Mammary epithelial cell (primary cell): ENCODE measurements at regions of chr2 and their contacts with region 1.

Region 1: GRCh38 chr2:56613920-56614319 is 430.1 kb downstream of the CCDC85A start:
- DNase-seq: no peak
- H3K4me3 ChIP-seq: no peak overlapping the region
- H3K27ac ChIP-seq: no peak overlapping the region
- H3K4me1 ChIP-seq: no peaks in the 10 kb centered on the region
- H3K27me3 ChIP-seq: no peaks in the 10 kb centered on the region
- CTCF ChIP-seq: no peak

Region 2: GRCh38 chr2:56055405-56055804 is 558.5 kb before region 1 on chr2:
- CTCF ChIA-PET with region 1: no interaction called
- dilution Hi-C with region 1: no loop called
- in situ Hi-C with region 1: no loop called
- intact Hi-C with region 1: no loop called
- DNase-seq: no peak
- H3K4me3 ChIP-seq: no peak overlapping the region
- H3K27ac ChIP-seq: no peak overlapping the region
- H3K4me1 ChIP-seq: no peaks in the 10 kb centered on the region
- H3K27me3 ChIP-seq: no peaks in the 10 kb centered on the region
- CTCF ChIP-seq: no peak

Region 3: GRCh38 chr2:56239437-56239836 is 374.5 kb before region 1 on chr2:
- CTCF ChIA-PET with region 1: no interaction called
- dilution Hi-C with region 1: no loop called
- in situ Hi-C with region 1: no loop called
- intact Hi-C with region 1: no loop called
- DNase-seq: peak; percentile 53
- H3K4me3 ChIP-seq: no peak overlapping the region
- H3K27ac ChIP-seq: no peak overlapping the region
- H3K4me1 ChIP-seq: no peaks in the 10 kb centered on the region
- H3K27me3 ChIP-seq: no peaks in the 10 kb centered on the region
- CTCF ChIP-seq: no peak

Region 4: DNA sequence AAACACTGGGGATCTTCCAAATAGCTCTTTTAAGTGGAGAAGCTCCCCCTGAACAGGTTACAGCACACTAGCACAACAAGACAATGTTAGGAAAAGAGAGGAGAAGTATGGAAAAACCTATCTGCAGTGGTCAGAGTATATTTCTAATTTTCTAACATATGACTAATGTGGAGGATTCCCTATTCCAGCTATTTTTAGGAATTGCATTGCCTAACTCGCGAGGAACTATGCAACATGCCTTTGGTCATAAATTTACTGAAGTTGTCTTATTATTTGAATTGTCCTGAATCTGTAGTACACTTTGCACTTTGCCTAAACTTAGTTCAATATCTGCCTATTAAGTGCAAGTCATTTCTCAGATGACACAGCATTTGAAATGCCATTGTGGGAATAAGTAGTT is 48.8 kb before region 1 on chr2:
- CTCF ChIA-PET with region 1: no interaction called
- dilution Hi-C with region 1: loop called (anchors 5 kb)
- in situ Hi-C with region 1: no loop called
- intact Hi-C with region 1: no loop called
- DNase-seq: no peak
- H3K4me3 ChIP-seq: no peak overlapping the region
- H3K27ac ChIP-seq: no peak overlapping the region
- H3K4me1 ChIP-seq: no peaks in the 10 kb centered on the region
- H3K27me3 ChIP-seq: no peaks in the 10 kb centered on the region
- CTCF ChIP-seq: no peak

Region 5: DNA sequence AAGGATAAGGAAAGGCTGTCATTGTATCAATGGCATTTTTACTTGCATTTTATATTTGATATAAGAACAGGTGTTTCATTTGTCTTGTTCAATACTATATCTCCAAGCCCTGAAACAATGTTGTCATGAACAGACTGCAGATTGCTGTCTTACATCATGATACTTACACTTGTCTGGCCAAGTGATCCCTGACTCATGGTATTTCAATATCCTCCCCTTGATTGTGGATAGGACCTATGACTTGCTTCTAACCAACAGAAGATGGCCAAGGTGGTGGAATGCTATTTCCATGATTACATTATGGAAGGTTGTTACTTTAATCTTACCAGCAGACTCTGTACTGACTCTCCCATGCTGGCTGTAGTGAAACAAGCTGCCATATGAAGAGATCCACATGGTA is 41.0 kb after region 1 on chr2:
- CTCF ChIA-PET with region 1: no interaction called
- dilution Hi-C with region 1: no loop called
- in situ Hi-C with region 1: no loop called
- intact Hi-C with region 1: no loop called
- DNase-seq: peak; percentile 21
- H3K4me3 ChIP-seq: no peak overlapping the region
- H3K27ac ChIP-seq: no peak overlapping the region
- H3K4me1 ChIP-seq: no peaks in the 10 kb centered on the region
- H3K27me3 ChIP-seq: no peaks in the 10 kb centered on the region
- CTCF ChIP-seq: no peak

Region 6: GRCh38 chr2:56666777-56667176 is 52.9 kb after region 1 on chr2:
- CTCF ChIA-PET with region 1: no interaction called
- dilution Hi-C with region 1: loop called (anchors 5 kb)
- in situ Hi-C with region 1: no loop called
- intact Hi-C with region 1: no loop called
- DNase-seq: no peak
- H3K4me3 ChIP-seq: no peak overlapping the region
- H3K27ac ChIP-seq: no peak overlapping the region
- H3K4me1 ChIP-seq: no peaks in the 10 kb centered on the region
- H3K27me3 ChIP-seq: no peaks in the 10 kb centered on the region
- CTCF ChIP-seq: no peak

Region 7: DNA sequence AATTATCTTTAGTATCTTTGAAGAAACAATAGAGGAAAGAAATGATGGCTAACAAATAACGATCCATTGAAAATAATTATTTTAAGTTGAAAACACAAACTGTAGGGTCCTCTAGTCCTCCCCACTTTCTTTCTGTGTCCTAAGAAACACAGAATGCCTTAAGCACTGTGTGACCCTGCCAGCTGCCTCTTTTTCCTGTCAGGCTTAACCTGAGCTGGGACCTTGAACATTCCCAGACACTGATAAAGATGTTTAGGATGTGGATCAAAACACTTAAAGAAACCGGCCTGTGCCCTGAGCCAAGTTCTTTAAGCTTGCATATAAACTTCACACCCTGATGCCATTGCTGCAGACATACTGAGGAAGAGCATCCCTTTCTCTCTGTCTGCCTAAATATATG is 677.3 kb after region 1 on chr2:
- CTCF ChIA-PET with region 1: no interaction called
- dilution Hi-C with region 1: no loop called
- in situ Hi-C with region 1: no loop called
- intact Hi-C with region 1: no loop called
- DNase-seq: no peak
- H3K4me3 ChIP-seq: no peak overlapping the region
- H3K27ac ChIP-seq: no peak overlapping the region
- H3K4me1 ChIP-seq: no peaks in the 10 kb centered on the region
- H3K27me3 ChIP-seq: no peaks in the 10 kb centered on the region
- CTCF ChIP-seq: no peak